B cell (primary cell): ENCODE measurements at regions of chr14 and their contacts with region 1.

Region 1: GRCh38 chr14:22491683-22492621 is 97.1 kb downstream of the DAD1 start:
- DNase-seq: peak; percentile 52
- ATAC-seq: peak; percentile 38
- H3K4me3 ChIP-seq: no peak overlapping the region
- H3K4me3 Mint-ChIP-seq: peak overlapping the region; percentile 30
- H3K27ac ChIP-seq: peak overlapping the region; percentile 16 to 26
- H3K27ac Mint-ChIP-seq: peak overlapping the region; percentile 86
- H3K4me1 ChIP-seq: peaks cover 25 to 71% of the 10 kb centered on the region in 2 donors
- H3K4me1 Mint-ChIP-seq: peaks cover 93% of the 10 kb centered on the region
- H3K27me3 ChIP-seq: no peaks in the 10 kb centered on the region
- H3K27me3 Mint-ChIP-seq: no peaks in the 10 kb centered on the region
- CTCF ChIP-seq: no peak

Region 2: GRCh38 chr14:22478670-22479069 is 13.3 kb before region 1 on chr14:
- CTCF ChIA-PET with region 1: interaction called, 17 read pairs
- POLR2A ChIA-PET with region 1: interaction called, 5 read pairs
- intact Hi-C with region 1: loop called (anchors 2 kb)
- DNase-seq: no peak
- ATAC-seq: no peak
- H3K4me3 ChIP-seq: no peak overlapping the region
- H3K4me3 Mint-ChIP-seq: peak overlapping the region; percentile 83
- H3K27ac ChIP-seq: peak overlapping the region; percentile 3 to 51
- H3K27ac Mint-ChIP-seq: peak overlapping the region; percentile 79
- H3K4me1 ChIP-seq: peaks cover 85 to 94% of the 10 kb centered on the region in 2 donors
- H3K4me1 Mint-ChIP-seq: peaks cover 95% of the 10 kb centered on the region
- H3K27me3 ChIP-seq: no peaks in the 10 kb centered on the region
- H3K27me3 Mint-ChIP-seq: no peaks in the 10 kb centered on the region
- CTCF ChIP-seq: no peak

Region 3: GRCh38 chr14:22598099-22598899 is 106.3 kb after region 1 on chr14 and contains the start of gene ABHD4:
- CTCF ChIA-PET with region 1: no interaction called
- POLR2A ChIA-PET with region 1: no interaction called
- intact Hi-C with region 1: no loop called
- DNase-seq: peak; percentile 79
- ATAC-seq: peak; percentile 96
- H3K4me3 ChIP-seq: peak within 1 kb of the TSS; percentile 90 to 97 (median 92)
- H3K4me3 Mint-ChIP-seq: peak within 1 kb of the TSS; percentile 98
- H3K27ac ChIP-seq: peak within 1 kb of the TSS; percentile 46 to 76
- H3K27ac Mint-ChIP-seq: peak within 1 kb of the TSS; percentile 96
- H3K4me1 ChIP-seq: peaks cover 15 to 22% of the 10 kb centered on the region in 2 donors
- H3K4me1 Mint-ChIP-seq: peaks cover 28% of the 10 kb centered on the region
- H3K27me3 ChIP-seq: no peaks in the 10 kb centered on the region
- H3K27me3 Mint-ChIP-seq: peaks cover 3% of the 10 kb centered on the region
- CTCF ChIP-seq: peak; percentile 6
- total RNA-seq, gene ABHD4: 21.8 and 22.7 TPM in 2 replicates